CD8-positive, alpha-beta memory T cell (primary cell): ENCODE measurements at regions of chr4 and their contacts with region 1.

Region 1: GRCh38 chr4:164731827-164732474 is 22.0 kb upstream of the SMIM31 start:
- DNase-seq: peak; percentile 4 to 44 (median 23)
- H3K4me3 ChIP-seq: no peak overlapping the region
- H3K4me3 Mint-ChIP-seq: no peak overlapping the region
- H3K27ac ChIP-seq: no peak overlapping the region
- H3K27ac Mint-ChIP-seq: no peak overlapping the region
- H3K4me1 ChIP-seq: no peaks in the 10 kb centered on the region
- H3K4me1 Mint-ChIP-seq: peaks cover 0 to 6% (median 0%) of the 10 kb centered on the region in 3 donors
- H3K27me3 ChIP-seq: no peaks in the 10 kb centered on the region
- H3K27me3 Mint-ChIP-seq: peaks cover 0 to 5% of the 10 kb centered on the region in 2 donors

Region 2: DNA sequence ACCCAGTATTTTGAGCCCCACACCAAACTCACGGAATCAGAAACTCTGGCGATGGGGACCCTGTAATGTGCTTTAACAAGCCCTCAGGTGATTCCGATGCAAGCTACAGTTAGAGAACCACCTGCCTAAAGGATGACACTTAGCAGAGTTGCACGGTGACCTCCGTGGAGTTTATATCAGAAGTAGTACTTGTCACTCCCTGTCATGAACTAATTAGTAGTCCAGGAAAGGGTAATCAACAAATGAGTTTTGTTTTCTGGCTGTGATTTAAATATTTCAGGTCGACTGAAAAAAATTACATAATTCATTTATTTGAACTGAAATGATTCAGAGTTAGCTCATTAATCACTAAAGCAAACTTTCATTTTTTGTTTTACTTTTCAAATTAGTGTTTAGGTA is 1181.1 kb before region 1 on chr4:
- CTCF ChIA-PET with region 1: interaction called, 15 read pairs
- POLR2A ChIA-PET with region 1: no interaction called
- DNase-seq: no peak
- H3K4me3 ChIP-seq: no peak overlapping the region
- H3K4me3 Mint-ChIP-seq: peak overlapping the region in 1 of 7 donors; percentile 82
- H3K27ac ChIP-seq: no peak overlapping the region
- H3K27ac Mint-ChIP-seq: no peak overlapping the region
- H3K4me1 ChIP-seq: peaks cover 4% of the 10 kb centered on the region
- H3K4me1 Mint-ChIP-seq: peaks cover 15 to 22% (median 17%) of the 10 kb centered on the region in 3 donors
- H3K27me3 ChIP-seq: no peaks in the 10 kb centered on the region
- H3K27me3 Mint-ChIP-seq: no peaks in the 10 kb centered on the region

Region 3: DNA sequence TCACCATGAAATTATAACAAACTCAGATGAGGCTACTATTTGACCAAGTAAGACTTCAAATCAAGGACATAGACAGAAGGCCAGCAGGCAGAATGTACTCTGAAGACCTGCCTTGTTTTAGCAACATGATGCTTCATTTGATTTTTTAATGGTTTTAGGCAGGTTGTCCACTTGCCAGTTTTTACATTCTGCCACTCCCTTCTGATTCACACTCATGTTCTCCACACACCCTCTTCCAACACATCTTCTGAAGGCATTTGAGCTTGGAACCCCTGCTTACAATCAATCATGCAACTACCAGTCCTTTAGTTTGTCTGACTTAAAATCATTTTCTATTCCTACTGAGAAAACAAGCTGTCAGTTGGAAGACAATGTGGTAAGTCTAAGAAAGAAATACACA is 93.0 kb before region 1 on chr4:
- CTCF ChIA-PET with region 1: no interaction called
- POLR2A ChIA-PET with region 1: no interaction called
- DNase-seq: no peak
- H3K4me3 ChIP-seq: no peak overlapping the region
- H3K4me3 Mint-ChIP-seq: no peak overlapping the region
- H3K27ac ChIP-seq: no peak overlapping the region
- H3K27ac Mint-ChIP-seq: no peak overlapping the region
- H3K4me1 ChIP-seq: no peaks in the 10 kb centered on the region
- H3K4me1 Mint-ChIP-seq: no peaks in the 10 kb centered on the region
- H3K27me3 ChIP-seq: no peaks in the 10 kb centered on the region
- H3K27me3 Mint-ChIP-seq: no peaks in the 10 kb centered on the region